PC-9 (cell line): ENCODE measurements at regions of chr20 and their contacts with region 1.

Region 1: GRCh38 chr20:60395991-60396390 is 437.8 kb downstream of the CDH26 start:
- DNase-seq: no peak
- H3K4me3 ChIP-seq: no peak overlapping the region
- H3K27ac ChIP-seq: no peak overlapping the region
- H3K4me1 ChIP-seq: no peaks in the 10 kb centered on the region
- H3K27me3 ChIP-seq: peaks cover 70% of the 10 kb centered on the region
- CTCF ChIP-seq: no peak

Region 2: GRCh38 chr20:60316476-60317158 is 79.4 kb before region 1 on chr20:
- CTCF ChIA-PET with region 1: no interaction called
- POLR2A ChIA-PET with region 1: no interaction called
- intact Hi-C with region 1: no loop called
- DNase-seq: no peak
- H3K4me3 ChIP-seq: no peak overlapping the region
- H3K27ac ChIP-seq: no peak overlapping the region
- H3K4me1 ChIP-seq: no peaks in the 10 kb centered on the region
- H3K27me3 ChIP-seq: peaks cover 42% of the 10 kb centered on the region
- CTCF ChIP-seq: no peak

Region 3: GRCh38 chr20:60446267-60447111 is 50.5 kb after region 1 on chr20:
- CTCF ChIA-PET with region 1: no interaction called
- POLR2A ChIA-PET with region 1: no interaction called
- intact Hi-C with region 1: no loop called
- DNase-seq: no peak
- H3K4me3 ChIP-seq: no peak overlapping the region
- H3K27ac ChIP-seq: no peak overlapping the region
- H3K4me1 ChIP-seq: no peaks in the 10 kb centered on the region
- H3K27me3 ChIP-seq: peaks cover 55% of the 10 kb centered on the region
- CTCF ChIP-seq: no peak

Region 4: GRCh38 chr20:60680554-60680953 is 284.6 kb after region 1 on chr20:
- CTCF ChIA-PET with region 1: interaction called, 12 read pairs
- POLR2A ChIA-PET with region 1: no interaction called
- intact Hi-C with region 1: no loop called
- DNase-seq: no peak
- H3K4me3 ChIP-seq: no peak overlapping the region
- H3K27ac ChIP-seq: no peak overlapping the region
- H3K4me1 ChIP-seq: no peaks in the 10 kb centered on the region
- H3K27me3 ChIP-seq: peaks cover 57% of the 10 kb centered on the region
- CTCF ChIP-seq: no peak

Region 5: DNA sequence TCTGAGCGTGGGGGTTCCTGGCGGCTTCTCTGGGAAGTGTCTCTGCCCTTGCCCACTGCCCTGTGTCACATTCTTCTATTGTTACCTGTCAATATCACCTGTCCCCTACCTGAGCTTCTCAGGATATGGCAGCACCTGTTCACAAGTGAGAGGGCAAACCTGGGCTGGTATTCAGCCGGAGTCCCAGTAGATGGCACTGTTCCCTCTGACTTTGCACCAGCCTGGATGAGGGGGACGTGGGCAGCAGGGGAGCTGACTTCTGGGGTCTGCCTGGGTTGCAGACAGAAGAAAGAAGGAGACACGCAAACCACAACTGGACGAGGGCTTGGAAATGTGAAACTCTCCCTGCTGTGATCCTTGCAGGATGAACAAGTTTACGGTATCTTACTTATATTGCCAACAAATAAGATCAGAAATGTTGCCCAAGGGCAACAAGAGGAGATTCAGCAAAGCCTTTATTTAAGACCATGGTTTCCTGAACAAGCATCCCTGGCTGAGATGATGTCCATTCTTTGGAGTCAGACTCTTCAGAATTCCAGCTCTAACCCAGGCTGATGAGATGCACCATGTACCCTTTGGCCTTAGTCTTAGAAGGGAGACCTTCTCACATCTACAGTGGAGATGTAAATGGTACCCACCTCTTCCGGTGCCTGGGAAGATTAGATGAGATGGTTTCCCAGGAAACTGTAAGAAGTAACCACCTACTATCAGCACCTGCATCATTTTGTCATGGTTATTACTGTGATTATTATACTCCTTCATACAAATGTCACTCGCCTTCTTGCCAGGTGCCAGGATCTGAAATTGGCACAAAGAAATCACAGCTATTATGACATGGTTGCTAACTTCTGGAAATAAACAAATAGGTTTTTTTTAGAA is 456.1 kb after region 1 on chr20:
- CTCF ChIA-PET with region 1: no interaction called
- POLR2A ChIA-PET with region 1: no interaction called
- intact Hi-C with region 1: no loop called
- DNase-seq: peak in 1 of 2 experiments; percentile 34
- H3K4me3 ChIP-seq: no peak overlapping the region
- H3K27ac ChIP-seq: no peak overlapping the region
- H3K4me1 ChIP-seq: no peaks in the 10 kb centered on the region
- H3K27me3 ChIP-seq: peaks cover 34% of the 10 kb centered on the region
- CTCF ChIP-seq: peak; percentile 68